Activated B cell treated with CpG ODN at 0.5 μM for 24 hours (primary cell): ENCODE measurements at regions of chr11 and their contacts with region 1.

Region 1: GRCh38 chr11:62601394-62602140 is at the start of gene MTA2:
- DNase-seq: peak; percentile 100
- ATAC-seq: peak; percentile 81
- H3K4me3 Mint-ChIP-seq: peak within 1 kb of the TSS; percentile 92
- H3K27ac Mint-ChIP-seq: peak within 1 kb of the TSS; percentile 97
- H3K4me1 Mint-ChIP-seq: peaks cover 45% of the 10 kb centered on the region
- H3K27me3 Mint-ChIP-seq: no peaks in the 10 kb centered on the region
- CTCF ChIP-seq: no peak
- total RNA-seq, gene MTA2: 170 and 175 TPM in 2 replicates

Region 2: DNA sequence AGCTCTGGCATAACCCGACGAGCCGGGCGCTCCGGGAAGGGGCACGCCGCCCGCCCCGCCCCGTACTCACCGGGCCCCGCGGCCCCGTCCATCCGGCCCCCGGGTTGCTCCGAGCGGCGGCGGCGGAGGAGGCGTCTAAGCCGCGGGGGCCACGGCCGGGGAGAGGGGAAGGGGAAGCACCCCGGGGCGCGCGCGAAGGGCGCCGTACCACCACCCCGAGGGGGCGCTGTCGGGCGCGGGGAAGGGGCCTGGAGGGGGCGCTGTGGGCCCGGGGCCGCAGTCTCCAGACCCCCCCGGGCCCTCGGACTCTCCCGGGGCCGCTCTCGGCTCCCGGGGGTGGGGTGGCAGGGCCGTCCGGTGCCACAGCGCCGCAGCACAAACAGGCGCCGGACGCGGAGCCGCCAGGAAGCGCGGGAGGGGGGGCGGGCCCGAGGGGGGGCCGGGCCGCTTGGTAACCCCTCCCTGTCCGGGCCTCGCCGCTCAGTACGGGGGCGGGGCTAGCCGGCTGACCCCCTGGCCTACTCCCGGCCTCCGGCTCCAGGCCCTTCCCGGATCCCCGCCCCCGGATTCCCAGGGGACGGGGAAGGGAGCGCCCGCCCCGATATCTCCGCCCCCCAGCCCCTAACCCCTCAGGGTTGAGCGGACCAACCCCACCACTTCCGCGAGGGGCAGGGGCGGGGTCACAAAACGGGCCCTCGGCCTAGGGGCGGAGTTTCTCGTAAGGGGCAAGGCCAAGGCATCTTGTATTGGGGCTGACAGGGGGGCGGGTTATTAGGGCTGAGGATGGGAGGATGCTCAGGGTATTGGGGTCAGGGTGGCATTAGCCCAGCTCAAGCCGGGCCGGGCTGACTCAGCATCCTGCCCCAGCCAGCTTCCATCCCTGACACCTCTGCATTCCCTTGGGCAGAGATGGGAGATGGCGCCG is 11.1 kb after region 1 on chr11 and contains the starts of genes EML3 and ROM1:
- CTCF ChIA-PET with region 1: interaction called, 6 read pairs
- POLR2A ChIA-PET with region 1: interaction called, 49 read pairs
- intact Hi-C with region 1: loop called (anchors 1 kb)
- DNase-seq: peak; percentile 95
- ATAC-seq: peak; percentile 82
- H3K4me3 Mint-ChIP-seq: peak within 1 kb of the TSS; percentile 93
- H3K27ac Mint-ChIP-seq: peak within 1 kb of the TSS; percentile 95
- H3K4me1 Mint-ChIP-seq: peaks cover 27% of the 10 kb centered on the region
- H3K27me3 Mint-ChIP-seq: no peaks in the 10 kb centered on the region
- CTCF ChIP-seq: peak; percentile 59
- total RNA-seq, gene EML3: 115 and 128 TPM in 2 replicates
- total RNA-seq, gene ROM1: 0.89 and 2.6 TPM in 2 replicates

Region 3: DNA sequence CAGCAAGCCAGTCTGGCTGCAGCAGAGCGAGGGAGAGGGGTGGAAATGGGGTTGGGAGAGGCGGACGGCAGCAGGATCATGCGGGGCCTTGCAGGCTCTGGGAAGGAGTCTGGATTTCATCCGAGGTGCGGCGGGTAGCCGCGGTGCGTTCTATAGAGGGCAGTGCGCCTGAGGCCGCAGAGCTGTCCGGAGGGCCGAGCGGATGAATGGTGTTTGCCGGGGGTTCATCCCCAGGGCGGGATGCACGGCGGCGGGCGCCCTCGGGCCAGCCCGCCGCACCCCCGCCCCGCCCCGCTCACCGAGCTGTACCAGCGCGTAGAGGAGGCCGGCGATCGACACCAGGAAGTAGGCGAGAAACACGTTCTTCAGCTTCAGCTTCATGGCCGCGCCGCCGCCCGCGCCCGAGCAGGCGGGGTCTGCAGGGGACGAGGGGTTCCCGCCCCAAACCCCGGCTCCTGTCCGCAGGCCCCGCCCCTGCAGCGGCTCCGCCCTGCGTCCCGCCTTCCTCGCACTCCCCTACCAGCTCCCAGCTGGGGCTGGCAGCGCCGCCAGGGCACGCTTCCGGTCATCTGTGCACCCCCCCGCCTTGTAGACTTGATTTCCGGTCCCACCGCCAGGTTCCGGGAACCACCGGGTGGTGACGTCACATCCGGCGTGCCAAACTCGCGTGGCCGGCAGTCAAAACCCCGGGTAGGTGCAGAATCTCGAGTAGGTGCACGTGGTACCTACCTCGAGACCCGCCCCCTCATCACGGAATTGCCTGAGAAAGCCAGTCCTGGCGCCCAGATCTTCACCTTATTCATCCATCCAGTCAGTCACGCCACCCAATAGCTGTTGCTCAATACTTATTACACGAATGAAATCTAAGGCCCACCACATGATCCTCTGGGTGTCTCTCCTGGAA is 20.3 kb after region 1 on chr11 and contains the start of gene B3GAT3:
- CTCF ChIA-PET with region 1: interaction called, 3 read pairs
- POLR2A ChIA-PET with region 1: interaction called, 55 read pairs
- intact Hi-C with region 1: loop called (anchors 1 kb)
- DNase-seq: peak; percentile 93
- ATAC-seq: peak; percentile 92
- H3K4me3 Mint-ChIP-seq: peak within 1 kb of the TSS; percentile 90
- H3K27ac Mint-ChIP-seq: peak within 1 kb of the TSS; percentile 93
- H3K4me1 Mint-ChIP-seq: peaks cover 19% of the 10 kb centered on the region
- H3K27me3 Mint-ChIP-seq: no peaks in the 10 kb centered on the region
- CTCF ChIP-seq: no peak
- total RNA-seq, gene B3GAT3: 48.8 and 56.6 TPM in 2 replicates

Region 4: DNA sequence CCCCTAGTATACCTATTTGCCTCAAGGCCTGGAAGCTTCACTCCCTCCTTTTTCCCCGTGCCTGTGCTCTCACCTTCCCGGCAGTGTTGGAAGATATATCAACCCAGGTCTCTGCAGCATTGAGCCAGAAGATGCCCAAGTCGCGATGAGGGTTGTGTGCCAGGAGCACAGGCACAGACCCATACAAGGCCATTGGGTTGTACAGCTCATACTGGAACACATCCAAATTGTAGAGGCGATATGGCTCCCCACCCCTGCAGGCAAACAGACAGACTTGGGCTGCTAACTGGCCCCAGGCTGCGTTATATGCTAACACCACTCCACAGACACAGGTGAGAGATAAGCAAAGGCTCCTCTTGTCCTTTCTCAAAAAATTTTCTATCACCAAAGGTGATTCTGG is 30.9 kb after region 1 on chr11:
- CTCF ChIA-PET with region 1: no interaction called
- POLR2A ChIA-PET with region 1: no interaction called
- intact Hi-C with region 1: no loop called
- DNase-seq: no peak
- ATAC-seq: no peak
- H3K4me3 Mint-ChIP-seq: no peak overlapping the region
- H3K27ac Mint-ChIP-seq: no peak overlapping the region
- H3K4me1 Mint-ChIP-seq: peaks cover 5% of the 10 kb centered on the region
- H3K27me3 Mint-ChIP-seq: no peaks in the 10 kb centered on the region
- CTCF ChIP-seq: no peak